ENCODE measurements at regions of chr18 and their contacts with region 1.

Region 1: DNA sequence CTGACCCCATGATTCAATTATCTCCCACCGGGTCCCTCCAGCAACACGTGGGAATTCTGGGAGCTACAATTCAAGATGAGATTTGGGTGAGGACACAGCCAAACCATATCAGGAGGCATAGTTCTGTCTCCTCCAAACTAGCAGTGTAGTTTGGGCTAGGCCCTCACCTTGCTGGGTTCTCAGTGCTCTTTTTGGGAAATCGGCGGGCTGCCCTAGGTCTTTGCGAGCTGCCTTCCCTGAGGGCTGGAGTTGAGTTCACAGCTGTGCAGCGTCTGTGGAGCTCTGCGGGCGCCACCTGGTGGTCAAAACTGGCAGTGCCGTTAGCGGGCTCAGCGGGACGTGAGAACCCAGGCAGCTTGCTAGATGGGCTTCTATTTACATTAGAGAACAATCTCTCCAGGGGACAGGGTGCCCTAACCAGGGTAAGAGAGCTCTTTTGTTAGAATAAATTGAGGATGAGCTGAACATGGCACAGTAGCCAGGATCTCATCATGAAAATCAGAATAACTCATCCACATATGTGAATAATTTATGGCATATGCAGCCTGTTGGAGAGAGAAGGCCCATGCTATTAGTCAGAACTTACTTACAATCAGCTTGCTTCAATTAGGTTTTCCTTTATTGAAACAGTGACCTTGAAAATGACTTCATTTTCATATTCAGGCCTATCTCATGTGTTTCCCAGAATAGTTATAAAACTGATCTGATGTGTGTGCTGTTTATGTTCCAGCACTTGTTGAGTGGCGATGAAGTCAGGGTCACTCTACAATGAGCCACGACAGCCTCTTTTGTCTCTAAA is 27.4 kb upstream of the YES1 start:
- DNase-seq: peak; percentile 75
- H3K4me3 Mint-ChIP-seq: no peak overlapping the region
- H3K27ac Mint-ChIP-seq: no peak overlapping the region
- H3K4me1 Mint-ChIP-seq: peaks cover 8% of the 10 kb centered on the region
- H3K27me3 Mint-ChIP-seq: peaks cover 10% of the 10 kb centered on the region

Region 2: GRCh38 chr18:741931-742512 is 97.4 kb before region 1 on chr18:
- intact Hi-C with region 1: loop called (anchors 1 kb)
- DNase-seq: no peak
- H3K4me3 Mint-ChIP-seq: no peak overlapping the region
- H3K27ac Mint-ChIP-seq: no peak overlapping the region
- H3K4me1 Mint-ChIP-seq: no peaks in the 10 kb centered on the region
- H3K27me3 Mint-ChIP-seq: no peaks in the 10 kb centered on the region

Region 3: GRCh38 chr18:901761-902160 is 62.3 kb after region 1 on chr18:
- intact Hi-C with region 1: no loop called
- DNase-seq: no peak
- H3K4me3 Mint-ChIP-seq: no peak overlapping the region
- H3K27ac Mint-ChIP-seq: no peak overlapping the region
- H3K4me1 Mint-ChIP-seq: no peaks in the 10 kb centered on the region
- H3K27me3 Mint-ChIP-seq: peaks cover 56% of the 10 kb centered on the region

Region 4: DNA sequence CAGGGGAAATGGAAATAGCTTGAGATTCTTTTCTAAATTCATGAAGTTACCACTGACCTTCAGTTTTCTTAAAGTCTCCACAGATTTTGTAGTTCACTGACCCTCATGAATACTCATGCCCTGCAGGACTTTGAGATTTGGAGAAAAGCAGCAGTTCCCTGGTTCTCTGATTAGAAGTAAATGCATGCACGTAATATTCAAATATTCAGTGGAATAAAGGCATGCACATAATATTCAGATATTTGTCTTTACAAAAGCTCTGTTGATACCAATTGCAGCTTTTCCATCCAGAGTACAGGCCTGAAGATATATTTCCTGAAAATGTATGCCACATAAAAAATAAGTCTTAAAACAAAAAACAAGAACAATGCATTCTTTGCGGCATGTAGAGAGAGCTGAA is 285.1 kb after region 1 on chr18:
- intact Hi-C with region 1: no loop called
- DNase-seq: no peak
- H3K4me3 Mint-ChIP-seq: no peak overlapping the region
- H3K27ac Mint-ChIP-seq: no peak overlapping the region
- H3K4me1 Mint-ChIP-seq: no peaks in the 10 kb centered on the region
- H3K27me3 Mint-ChIP-seq: no peaks in the 10 kb centered on the region

Measured in activated T-helper 1 cell treated with anti-CD3 and anti-CD28 coated beads, Interleukin-12 subunit alpha, Interleukin-12 subunit beta, Interleukin-2, Interleukin-4 antibody, amounts not matched to agents 30 ng/mL and 10 ng/mL and 1 ng/mL, durations not matched to agents 14 hours and 24 hours and 36 hours (primary cell).